ENCODE measurements at regions of chr5 and their contacts with region 1.

Region 1: GRCh38 chr5:146965761-146966659 is 87.5 kb upstream of the PPP2R2B start:
- DNase-seq: peak; percentile 59
- H3K4me3 Mint-ChIP-seq: no peak overlapping the region
- H3K27ac Mint-ChIP-seq: no peak overlapping the region
- H3K4me1 Mint-ChIP-seq: no peaks in the 10 kb centered on the region
- H3K27me3 Mint-ChIP-seq: no peaks in the 10 kb centered on the region

Region 2: GRCh38 chr5:146533260-146533857 is 432.7 kb before region 1 on chr5:
- CTCF ChIA-PET with region 1: interaction called, 21 read pairs
- DNase-seq: peak; percentile 85
- H3K4me3 Mint-ChIP-seq: no peak overlapping the region
- H3K27ac Mint-ChIP-seq: no peak overlapping the region
- H3K4me1 Mint-ChIP-seq: peaks cover 12% of the 10 kb centered on the region
- H3K27me3 Mint-ChIP-seq: peaks cover 9% of the 10 kb centered on the region

Region 3: GRCh38 chr5:146541958-146542849 is 423.8 kb before region 1 on chr5:
- CTCF ChIA-PET with region 1: interaction called, 57 read pairs
- DNase-seq: peak; percentile 75
- H3K4me3 Mint-ChIP-seq: no peak overlapping the region
- H3K27ac Mint-ChIP-seq: no peak overlapping the region
- H3K4me1 Mint-ChIP-seq: no peaks in the 10 kb centered on the region
- H3K27me3 Mint-ChIP-seq: peaks cover 7% of the 10 kb centered on the region

Region 4: GRCh38 chr5:146565764-146566367 is 400.1 kb before region 1 on chr5:
- CTCF ChIA-PET with region 1: interaction called, 16 read pairs
- DNase-seq: peak; percentile 63
- H3K4me3 Mint-ChIP-seq: no peak overlapping the region
- H3K27ac Mint-ChIP-seq: no peak overlapping the region
- H3K4me1 Mint-ChIP-seq: no peaks in the 10 kb centered on the region
- H3K27me3 Mint-ChIP-seq: peaks cover 5% of the 10 kb centered on the region

Region 5: GRCh38 chr5:146662229-146662628 is 303.8 kb before region 1 on chr5:
- CTCF ChIA-PET with region 1: interaction called, 44 read pairs
- DNase-seq: no peak
- H3K4me3 Mint-ChIP-seq: no peak overlapping the region
- H3K27ac Mint-ChIP-seq: no peak overlapping the region
- H3K4me1 Mint-ChIP-seq: no peaks in the 10 kb centered on the region
- H3K27me3 Mint-ChIP-seq: no peaks in the 10 kb centered on the region

Region 6: GRCh38 chr5:146894753-146895521 is 71.1 kb before region 1 on chr5:
- CTCF ChIA-PET with region 1: no interaction called
- DNase-seq: no peak
- H3K4me3 Mint-ChIP-seq: no peak overlapping the region
- H3K27ac Mint-ChIP-seq: no peak overlapping the region
- H3K4me1 Mint-ChIP-seq: peaks cover 5% of the 10 kb centered on the region
- H3K27me3 Mint-ChIP-seq: no peaks in the 10 kb centered on the region